Ovary (tissue), 10 donors: ENCODE measurements at regions of chr22 and their contacts with region 1.

Region 1: DNA sequence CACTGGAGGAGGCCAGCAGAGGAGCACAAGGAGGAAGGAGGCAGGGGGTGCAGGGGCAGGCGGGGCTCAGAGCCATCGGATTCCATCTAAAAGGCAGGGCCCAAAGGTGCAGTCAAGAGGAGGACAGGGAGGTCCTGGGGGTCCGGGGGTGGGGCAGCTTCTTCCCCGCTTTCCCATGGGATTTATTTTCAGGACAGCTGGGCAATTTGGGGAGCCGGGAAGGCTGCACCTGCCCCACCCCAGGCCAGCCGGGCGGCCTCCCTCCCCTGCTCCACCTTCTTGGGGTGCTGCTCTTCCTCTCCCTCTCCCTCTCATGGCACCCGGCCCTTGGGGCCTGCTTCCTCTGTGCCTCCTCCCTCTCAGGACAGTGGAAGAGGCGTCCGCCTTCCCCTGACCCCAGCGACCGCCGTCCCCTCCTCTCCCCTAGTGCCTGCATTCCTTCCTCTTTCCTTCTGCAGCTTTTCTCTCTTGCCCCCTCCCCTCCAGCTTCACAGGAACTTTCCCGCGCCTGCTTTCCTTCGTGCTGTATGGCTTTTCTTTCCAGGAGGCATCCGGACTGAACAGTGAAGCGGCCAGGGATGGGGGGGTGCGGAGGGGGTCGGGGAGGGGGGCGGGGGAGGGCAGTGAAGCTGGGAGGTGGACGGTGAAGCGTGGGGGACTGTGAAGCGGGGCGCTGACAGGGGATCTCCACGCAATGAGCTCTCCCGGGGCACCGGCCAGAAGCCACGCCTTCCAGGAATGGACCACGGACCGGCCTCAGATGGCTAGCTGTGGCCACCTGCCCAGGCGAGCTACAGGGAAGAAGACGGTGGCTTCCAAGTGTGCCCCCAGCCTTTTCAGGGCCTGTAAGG is 26.9 kb downstream of the APOBEC3H start:
- DNase-seq: peak in 1 of 5 donors; percentile 30
- H3K4me3 ChIP-seq: no peak overlapping the region
- H3K27ac ChIP-seq: no peak overlapping the region
- H3K4me1 ChIP-seq: no peaks in the 10 kb centered on the region
- H3K27me3 ChIP-seq: no peaks in the 10 kb centered on the region
- CTCF ChIP-seq: no peak
- EP300 ChIP-seq: no peak
- POLR2A ChIP-seq: no peak

Region 2: DNA sequence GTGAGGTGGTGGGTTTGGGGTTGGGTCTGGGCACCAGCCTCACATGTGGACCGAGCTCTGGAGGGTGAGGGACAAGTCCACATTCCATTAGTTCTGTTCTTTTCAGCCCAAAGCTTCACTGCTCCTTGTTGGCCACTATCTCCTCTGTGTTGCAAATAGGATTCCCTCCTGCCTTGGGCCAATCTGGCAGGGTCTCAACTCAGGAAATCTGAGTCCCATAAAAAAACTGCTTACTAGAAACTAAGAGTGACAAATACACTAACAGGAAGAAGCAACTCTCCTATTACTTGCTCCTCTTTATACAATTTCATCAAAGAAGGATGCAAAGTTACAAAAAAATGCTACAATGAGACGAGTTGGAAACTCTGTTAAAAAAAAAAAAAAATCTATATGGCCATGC is 740.6 kb before region 1 on chr22:
- intact Hi-C with region 1: no loop called
- DNase-seq: no peak
- H3K4me3 ChIP-seq: no peak overlapping the region
- H3K27ac ChIP-seq: no peak overlapping the region
- H3K4me1 ChIP-seq: no peaks in the 10 kb centered on the region
- H3K27me3 ChIP-seq: no peaks in the 10 kb centered on the region
- CTCF ChIP-seq: no peak
- EP300 ChIP-seq: no peak
- POLR2A ChIP-seq: no peak

Region 3: DNA sequence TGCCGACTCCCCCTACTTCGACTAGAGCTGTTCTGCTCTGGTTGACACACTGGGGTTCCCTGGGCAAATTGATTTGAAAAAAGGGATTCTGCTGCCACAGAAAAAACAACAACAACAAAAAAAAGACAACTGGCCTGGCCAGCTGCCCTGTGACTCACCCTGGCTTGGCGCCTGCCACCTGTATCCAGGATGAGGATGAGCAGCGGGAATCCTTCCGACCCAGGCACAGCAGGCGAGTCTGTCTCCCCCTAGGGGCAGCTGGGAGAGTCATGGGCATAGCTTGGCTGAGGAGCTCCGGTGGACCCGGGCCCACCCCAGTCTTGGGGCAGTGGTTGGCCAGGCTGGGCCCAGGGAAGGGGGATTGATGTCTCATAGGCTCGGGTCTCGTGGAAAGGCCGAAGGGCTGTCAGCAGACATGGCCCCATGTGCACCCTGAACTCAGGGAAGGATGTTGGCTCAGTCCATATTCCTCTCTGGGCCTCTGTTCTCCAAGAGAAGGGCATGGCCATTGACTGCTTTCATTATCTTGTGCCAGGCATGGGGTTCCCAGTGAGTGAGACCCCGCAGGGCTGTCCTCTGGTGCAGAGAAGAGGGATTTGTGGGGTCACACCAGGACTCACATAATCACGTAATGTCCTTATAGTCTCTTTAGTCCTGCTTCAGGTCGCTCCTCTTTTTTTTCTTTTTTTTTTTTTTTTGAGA is 357.7 kb before region 1 on chr22:
- intact Hi-C with region 1: loop called in 3 of 4 experiments (anchors 5 to 10 kb)
- DNase-seq: peak; percentile 61 to 78 (median 64)
- H3K4me3 ChIP-seq: no peak overlapping the region
- H3K27ac ChIP-seq: no peak overlapping the region
- H3K4me1 ChIP-seq: peaks cover 7% of the 10 kb centered on the region
- H3K27me3 ChIP-seq: no peaks in the 10 kb centered on the region
- CTCF ChIP-seq: peak in 2 of 3 donors; percentile 43 to 53
- EP300 ChIP-seq: no peak
- POLR2A ChIP-seq: no peak

Region 4: DNA sequence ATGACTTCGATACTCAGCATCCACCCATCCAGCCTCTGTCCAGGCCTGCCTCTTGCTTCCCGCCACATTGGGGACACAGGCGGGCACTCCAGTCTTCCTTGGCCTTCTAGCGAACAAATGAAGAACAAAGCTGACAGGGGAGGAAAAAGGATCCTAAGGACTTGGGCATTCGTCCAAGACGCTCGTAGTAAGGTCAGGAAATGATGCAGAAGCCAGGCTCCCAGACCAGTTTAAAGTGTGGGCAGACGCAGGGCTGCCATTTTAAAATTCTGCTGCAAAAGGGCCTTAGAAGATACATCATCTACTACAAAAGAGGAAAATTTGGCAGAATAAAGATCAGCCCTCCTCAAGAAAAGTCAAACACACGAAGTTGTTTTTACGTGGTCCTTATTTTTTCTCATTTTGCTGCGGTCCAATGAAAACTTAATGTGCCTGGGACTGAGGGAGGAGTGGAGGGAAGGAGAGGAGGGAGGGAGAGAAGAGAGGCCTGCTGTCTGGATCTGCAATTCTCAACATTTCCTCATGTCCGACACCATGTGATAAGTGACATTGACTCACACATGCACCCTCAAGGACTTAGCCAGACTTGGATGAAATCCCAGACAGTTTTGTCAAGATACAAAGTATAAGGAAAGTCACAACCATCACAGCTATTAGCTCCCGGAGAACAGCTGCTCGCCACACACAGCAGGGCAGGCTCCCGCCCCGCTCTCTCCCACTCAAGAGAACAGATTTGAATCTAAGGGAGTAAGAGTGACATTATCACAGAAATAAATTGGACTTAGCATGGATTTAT is 335.8 kb before region 1 on chr22:
- intact Hi-C with region 1: loop called in 1 of 4 experiments (anchors 10 kb)
- DNase-seq: peak in 3 of 5 donors; percentile 58 to 70 (median 66)
- H3K4me3 ChIP-seq: no peak overlapping the region
- H3K27ac ChIP-seq: peak overlapping the region in 1 of 2 donors; percentile 93
- H3K4me1 ChIP-seq: peaks cover 25% of the 10 kb centered on the region
- H3K27me3 ChIP-seq: no peaks in the 10 kb centered on the region
- CTCF ChIP-seq: no peak
- EP300 ChIP-seq: no peak
- POLR2A ChIP-seq: no peak

Region 5: DNA sequence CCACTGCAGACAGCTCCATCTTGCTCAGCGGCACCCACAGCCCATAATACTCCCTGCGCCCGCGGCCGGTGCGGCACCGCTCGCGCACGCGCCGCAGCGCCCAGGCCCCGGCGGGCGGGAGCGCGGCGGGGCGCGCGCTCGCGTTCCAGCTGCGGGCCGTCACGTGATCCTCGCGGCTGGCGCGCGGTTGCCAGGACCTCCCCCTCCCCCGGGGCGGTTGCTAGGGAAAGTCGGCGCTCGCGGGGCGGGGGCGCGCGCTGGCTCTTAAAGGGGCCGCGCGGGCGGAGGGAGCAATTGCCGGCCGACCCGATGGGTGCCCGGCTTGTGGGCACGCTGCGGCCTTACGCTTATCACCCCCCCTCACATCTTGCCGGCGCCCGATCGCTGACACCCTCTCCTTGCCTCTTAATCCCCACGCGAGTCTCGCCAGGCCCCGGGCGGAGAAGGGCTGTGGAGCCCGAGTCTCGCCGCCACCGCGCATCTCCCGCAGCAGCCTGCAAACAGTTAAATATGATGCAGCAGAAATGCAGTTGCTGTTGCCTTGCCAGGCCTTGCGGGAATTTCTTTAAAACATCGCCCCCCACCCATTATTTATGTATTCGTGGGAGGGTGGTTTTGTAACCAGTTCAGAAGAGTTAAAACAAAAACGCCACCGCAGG is 251.7 kb before region 1 on chr22 and contains the start of gene CBX6:
- intact Hi-C with region 1: loop called in 3 of 4 experiments (anchors 5 to 10 kb)
- DNase-seq: peak; percentile 96 to 99 (median 98)
- H3K4me3 ChIP-seq: peak within 1 kb of the TSS; percentile 64
- H3K27ac ChIP-seq: peak within 1 kb of the TSS; percentile 95
- H3K4me1 ChIP-seq: peaks cover 3% of the 10 kb centered on the region
- H3K27me3 ChIP-seq: no peaks in the 10 kb centered on the region
- CTCF ChIP-seq: peak in 1 of 3 donors; percentile 10
- EP300 ChIP-seq: no peak
- POLR2A ChIP-seq: peak; percentile 43
- total RNA-seq, gene CBX6: 32.7 to 175 (median 120) TPM

Region 6: GRCh38 chr22:39013942-39014722 is 109.8 kb before region 1 on chr22 and contains the start of gene APOBEC3C:
- intact Hi-C with region 1: loop called in 2 of 4 experiments (anchors 5 to 10 kb)
- DNase-seq: peak; percentile 84 to 92 (median 88)
- H3K4me3 ChIP-seq: peak within 1 kb of the TSS; percentile 49
- H3K27ac ChIP-seq: peak within 1 kb of the TSS; percentile 71 to 88
- H3K4me1 ChIP-seq: peaks cover 4% of the 10 kb centered on the region
- H3K27me3 ChIP-seq: no peaks in the 10 kb centered on the region
- CTCF ChIP-seq: no peak
- EP300 ChIP-seq: no peak
- POLR2A ChIP-seq: peak; percentile 36
- total RNA-seq, gene APOBEC3C: 7.0 to 63.4 (median 52.4) TPM